Naive thymus-derived CD4-positive, alpha-beta T cell (primary cell): ENCODE measurements at regions of chr7 and their contacts with region 1.

Region 1: DNA sequence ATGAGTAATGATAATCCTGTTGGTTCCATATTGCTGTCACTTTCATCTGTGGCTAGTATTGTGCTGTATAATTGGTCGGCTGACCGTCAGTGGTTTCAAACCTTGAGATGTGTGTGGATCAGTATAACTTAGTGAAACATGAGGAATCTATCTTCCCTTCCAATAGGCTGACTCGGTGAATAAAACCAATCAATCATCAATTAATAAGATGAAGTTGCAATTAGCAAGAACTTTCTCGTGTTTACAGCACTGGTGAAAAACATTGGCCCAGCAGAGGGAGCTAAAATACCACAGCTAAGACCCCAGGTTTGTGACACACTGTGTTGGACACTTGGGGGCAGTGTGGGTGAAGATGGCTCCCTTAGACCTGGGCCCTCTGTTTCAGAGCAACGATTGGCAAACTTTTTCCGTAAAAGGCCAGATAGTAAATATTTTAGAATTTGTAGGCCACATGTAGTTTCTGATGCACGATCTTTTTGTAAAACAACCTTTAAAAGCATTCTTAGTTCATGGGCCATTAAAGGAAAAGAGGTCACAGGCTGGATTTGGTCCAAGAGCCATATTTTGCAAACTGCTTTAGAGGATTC is 47.8 kb downstream of the STRA8 start:
- DNase-seq: peak; percentile 26 to 81 (median 73)
- ATAC-seq: peak; percentile 99
- H3K4me3 ChIP-seq: no peak overlapping the region
- H3K4me3 Mint-ChIP-seq: peak overlapping the region in 3 of 10 donors; percentile 4 to 42 (median 8)
- H3K27ac ChIP-seq: no peak overlapping the region
- H3K27ac Mint-ChIP-seq: peak overlapping the region in 2 of 9 donors; percentile 11 to 51
- H3K4me1 ChIP-seq: no peaks in the 10 kb centered on the region
- H3K4me1 Mint-ChIP-seq: peaks cover 4 to 17% (median 12%) of the 10 kb centered on the region in 7 donors
- H3K27me3 ChIP-seq: no peaks in the 10 kb centered on the region
- H3K27me3 Mint-ChIP-seq: peaks cover 4 to 10% (median 9%) of the 10 kb centered on the region in 5 donors

Region 2: DNA sequence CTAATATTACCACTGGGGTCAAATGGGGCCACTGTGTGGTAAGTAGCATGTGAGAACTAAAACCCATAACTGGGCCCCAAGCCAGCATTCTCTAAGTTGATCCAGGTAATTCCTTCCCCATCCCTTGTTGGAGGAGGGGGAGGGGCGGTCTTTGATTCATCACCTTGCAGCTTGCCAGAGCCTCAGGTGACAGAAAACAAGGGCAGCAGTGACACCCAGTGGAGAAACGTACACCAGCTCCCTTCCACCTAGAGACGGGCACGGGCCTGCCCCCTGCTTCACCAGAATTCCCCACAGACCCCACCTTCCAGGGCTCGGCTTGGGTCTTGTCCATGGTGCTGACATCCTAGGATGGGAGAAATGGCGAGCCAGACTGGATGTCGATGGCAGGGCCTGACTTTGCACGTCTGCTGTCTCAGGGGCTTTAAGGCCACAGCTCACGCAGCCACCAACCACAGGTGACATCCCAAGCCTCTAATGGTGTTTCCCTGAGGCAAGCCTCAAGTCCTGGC is 54.2 kb after region 1 on chr7:
- CTCF ChIA-PET with region 1: interaction called, 4 read pairs
- POLR2A ChIA-PET with region 1: no interaction called
- intact Hi-C with region 1: loop called (anchors 1 kb)
- DNase-seq: peak in 2 of 9 donors; percentile 10 to 11
- ATAC-seq: no peak
- H3K4me3 ChIP-seq: no peak overlapping the region
- H3K4me3 Mint-ChIP-seq: no peak overlapping the region
- H3K27ac ChIP-seq: no peak overlapping the region
- H3K27ac Mint-ChIP-seq: no peak overlapping the region
- H3K4me1 ChIP-seq: no peaks in the 10 kb centered on the region
- H3K4me1 Mint-ChIP-seq: peaks cover 0 to 2% (median 0%) of the 10 kb centered on the region in 7 donors
- H3K27me3 ChIP-seq: no peaks in the 10 kb centered on the region
- H3K27me3 Mint-ChIP-seq: no peaks in the 10 kb centered on the region

Region 3: GRCh38 chr7:135575296-135575695 is 293.8 kb after region 1 on chr7:
- CTCF ChIA-PET with region 1: no interaction called
- POLR2A ChIA-PET with region 1: no interaction called
- intact Hi-C with region 1: loop called in 1 of 2 experiments (anchors 5 kb)
- DNase-seq: no peak
- ATAC-seq: no peak
- H3K4me3 ChIP-seq: no peak overlapping the region
- H3K4me3 Mint-ChIP-seq: peak overlapping the region in 1 of 10 donors; percentile 48
- H3K27ac ChIP-seq: no peak overlapping the region
- H3K27ac Mint-ChIP-seq: peak overlapping the region in 5 of 9 donors; percentile 7 to 87 (median 66)
- H3K4me1 ChIP-seq: no peaks in the 10 kb centered on the region
- H3K4me1 Mint-ChIP-seq: peaks cover 9 to 22% (median 13%) of the 10 kb centered on the region in 7 donors
- H3K27me3 ChIP-seq: no peaks in the 10 kb centered on the region
- H3K27me3 Mint-ChIP-seq: no peaks in the 10 kb centered on the region

Region 4: DNA sequence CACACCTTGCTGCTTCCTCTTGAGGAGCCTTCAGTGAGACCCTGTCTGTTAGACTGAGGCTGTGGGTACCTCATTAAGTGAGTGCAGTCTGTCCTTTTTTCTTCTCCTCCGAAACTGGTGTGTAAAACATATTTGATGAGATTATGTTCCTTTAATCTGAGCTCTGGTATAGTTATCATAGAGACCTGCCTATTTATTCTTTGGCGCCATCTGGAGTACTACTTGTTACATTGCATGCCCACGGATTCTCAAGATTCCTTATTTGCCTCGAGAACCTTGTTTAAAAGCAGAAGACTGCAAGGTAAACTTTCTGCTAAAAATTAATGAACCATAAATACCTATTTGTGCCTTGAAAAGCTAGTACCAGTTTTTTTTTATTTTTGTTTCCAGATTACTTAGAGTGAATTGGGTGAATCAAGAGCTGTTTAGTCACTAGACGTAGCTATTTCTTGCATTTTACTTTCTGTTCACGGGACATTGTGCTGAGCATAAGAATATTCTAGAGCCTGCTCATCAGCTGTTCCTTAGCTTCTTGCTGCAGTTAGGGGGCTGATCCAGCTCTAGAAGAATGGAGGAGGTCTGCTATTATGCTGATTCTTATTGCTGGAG is 363.9 kb after region 1 on chr7:
- CTCF ChIA-PET with region 1: interaction called, 38 read pairs
- POLR2A ChIA-PET with region 1: no interaction called
- intact Hi-C with region 1: loop called (anchors 1 kb)
- DNase-seq: peak in 7 of 9 donors; percentile 8 to 50 (median 41)
- ATAC-seq: peak; percentile 88
- H3K4me3 ChIP-seq: no peak overlapping the region
- H3K4me3 Mint-ChIP-seq: no peak overlapping the region
- H3K27ac ChIP-seq: no peak overlapping the region
- H3K27ac Mint-ChIP-seq: peak overlapping the region in 4 of 9 donors; percentile 1 to 27 (median 20)
- H3K4me1 ChIP-seq: no peaks in the 10 kb centered on the region
- H3K4me1 Mint-ChIP-seq: peaks cover 0 to 7% (median 0%) of the 10 kb centered on the region in 7 donors
- H3K27me3 ChIP-seq: no peaks in the 10 kb centered on the region
- H3K27me3 Mint-ChIP-seq: no peaks in the 10 kb centered on the region

Region 5: DNA sequence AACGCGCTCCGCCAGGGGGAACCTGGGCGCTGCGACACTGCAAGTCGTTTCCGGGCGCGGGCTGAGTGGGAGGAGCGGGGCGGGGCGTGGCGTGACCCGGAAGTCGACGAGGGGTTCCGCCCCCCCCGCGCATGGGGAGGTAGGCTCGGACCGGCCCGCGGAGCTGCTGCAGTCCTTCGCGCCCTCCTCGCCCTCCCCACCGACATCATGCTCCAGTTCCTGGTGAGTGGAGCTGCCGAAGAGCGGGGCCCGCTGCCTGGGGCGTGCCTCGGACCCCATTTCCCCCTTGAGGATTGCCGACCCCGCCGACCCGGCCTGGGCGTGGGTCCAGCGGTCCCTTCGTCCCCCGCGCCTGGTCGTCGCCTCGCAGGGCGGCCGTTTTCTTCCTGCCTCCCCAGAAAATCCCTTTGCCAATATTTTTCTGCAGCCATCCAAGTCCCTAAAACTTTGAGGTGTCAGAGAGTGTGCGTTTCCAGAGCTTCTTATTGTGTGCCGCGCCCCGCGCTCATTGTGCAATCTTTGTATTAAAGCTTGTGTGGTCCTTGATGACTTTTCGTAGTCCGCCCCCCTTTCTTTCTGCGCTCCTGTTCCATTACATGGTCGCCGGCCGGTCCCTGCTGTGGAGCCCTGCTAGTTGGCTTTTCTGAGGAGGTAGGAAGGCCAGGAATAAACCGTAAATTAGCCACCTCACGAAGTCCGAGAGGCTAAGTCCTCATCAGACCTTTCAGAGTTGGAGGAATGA is 381.1 kb after region 1 on chr7 and contains the start of gene STMP1:
- CTCF ChIA-PET with region 1: no interaction called
- POLR2A ChIA-PET with region 1: no interaction called
- intact Hi-C with region 1: loop called in 1 of 2 experiments (anchors 1 kb)
- DNase-seq: peak; percentile 89 to 97 (median 94)
- ATAC-seq: peak; percentile 99
- H3K4me3 ChIP-seq: peak within 1 kb of the TSS; percentile 91
- H3K4me3 Mint-ChIP-seq: peak within 1 kb of the TSS; percentile 86 to 98 (median 94)
- H3K27ac ChIP-seq: peak within 1 kb of the TSS; percentile 82
- H3K27ac Mint-ChIP-seq: peak within 1 kb of the TSS; percentile 80 to 95 (median 93)
- H3K4me1 ChIP-seq: peaks cover 6 to 15% of the 10 kb centered on the region in 2 donors
- H3K4me1 Mint-ChIP-seq: peaks cover 32 to 49% (median 43%) of the 10 kb centered on the region in 7 donors
- H3K27me3 ChIP-seq: no peaks in the 10 kb centered on the region
- H3K27me3 Mint-ChIP-seq: no peaks in the 10 kb centered on the region
- total RNA-seq, gene STMP1: 18.0 to 33.0 (median 24.7) TPM

Region 6: GRCh38 chr7:135801045-135801693 is 519.7 kb after region 1 on chr7:
- CTCF ChIA-PET with region 1: no interaction called
- POLR2A ChIA-PET with region 1: no interaction called
- intact Hi-C with region 1: loop called in 1 of 2 experiments (anchors 5 kb)
- DNase-seq: peak in 7 of 9 donors; percentile 16 to 59 (median 50)
- ATAC-seq: peak; percentile 78
- H3K4me3 ChIP-seq: no peak overlapping the region
- H3K4me3 Mint-ChIP-seq: peak overlapping the region in 1 of 10 donors; percentile 6
- H3K27ac ChIP-seq: no peak overlapping the region
- H3K27ac Mint-ChIP-seq: no peak overlapping the region
- H3K4me1 ChIP-seq: peaks cover 0 to 8% of the 10 kb centered on the region in 2 donors
- H3K4me1 Mint-ChIP-seq: peaks cover 0 to 7% (median 5%) of the 10 kb centered on the region in 7 donors
- H3K27me3 ChIP-seq: no peaks in the 10 kb centered on the region
- H3K27me3 Mint-ChIP-seq: peaks cover 10 to 26% (median 14%) of the 10 kb centered on the region in 5 donors

Region 7: GRCh38 chr7:136009488-136010079 is 728.1 kb after region 1 on chr7:
- CTCF ChIA-PET with region 1: no interaction called
- POLR2A ChIA-PET with region 1: no interaction called
- intact Hi-C with region 1: loop called in 1 of 2 experiments (anchors 1 kb)
- DNase-seq: peak in 7 of 9 donors; percentile 13 to 51 (median 40)
- ATAC-seq: peak; percentile 45
- H3K4me3 ChIP-seq: no peak overlapping the region
- H3K4me3 Mint-ChIP-seq: no peak overlapping the region
- H3K27ac ChIP-seq: no peak overlapping the region
- H3K27ac Mint-ChIP-seq: no peak overlapping the region
- H3K4me1 ChIP-seq: no peaks in the 10 kb centered on the region
- H3K4me1 Mint-ChIP-seq: peaks cover 0 to 10% (median 6%) of the 10 kb centered on the region in 7 donors
- H3K27me3 ChIP-seq: no peaks in the 10 kb centered on the region
- H3K27me3 Mint-ChIP-seq: peaks cover 3 to 22% (median 9%) of the 10 kb centered on the region in 5 donors